Mammary epithelial cell (primary cell): ENCODE measurements at regions of chr6 and their contacts with region 1.

Region 1: DNA sequence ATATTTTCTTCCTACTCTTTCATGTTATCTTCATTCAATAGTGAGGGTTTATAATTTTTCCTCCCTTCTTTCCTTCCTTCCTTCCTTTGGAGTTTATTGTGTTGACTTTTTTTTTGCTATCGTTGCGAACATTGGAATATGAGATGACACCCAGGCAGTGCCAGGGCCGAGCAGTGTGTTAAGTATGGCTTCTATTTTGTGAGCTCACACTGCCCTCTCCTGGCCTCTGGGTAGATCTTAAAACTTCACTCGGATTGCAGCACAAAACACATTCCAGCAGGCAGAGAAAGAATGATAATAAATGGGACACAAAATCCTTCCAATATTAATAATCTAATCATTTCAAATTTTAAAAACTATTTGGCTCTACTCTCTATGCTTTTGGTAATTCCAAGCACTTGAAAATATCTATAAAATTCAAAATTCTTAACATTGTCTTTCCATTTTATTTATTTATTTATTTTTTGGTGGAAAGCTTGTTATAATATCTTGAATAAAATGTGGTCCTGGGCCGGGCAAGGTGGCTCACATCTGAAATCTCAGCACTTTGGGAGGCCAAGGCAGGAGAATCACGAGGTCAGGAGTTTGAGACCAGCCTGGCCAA is 147.4 kb upstream of the OLIG3 start:
- DNase-seq: peak; percentile 57
- H3K4me3 ChIP-seq: no peak overlapping the region
- H3K27ac ChIP-seq: no peak overlapping the region
- H3K4me1 ChIP-seq: peaks cover 10% of the 10 kb centered on the region
- H3K27me3 ChIP-seq: no peaks in the 10 kb centered on the region
- CTCF ChIP-seq: peak; percentile 68 to 69

Region 2: GRCh38 chr6:136967876-136968752 is 673.5 kb before region 1 on chr6:
- CTCF ChIA-PET with region 1: no interaction called
- dilution Hi-C with region 1: no loop called
- in situ Hi-C with region 1: no loop called
- intact Hi-C with region 1: loop called (anchors 5 kb)
- DNase-seq: peak; percentile 64
- H3K4me3 ChIP-seq: no peak overlapping the region
- H3K27ac ChIP-seq: no peak overlapping the region
- H3K4me1 ChIP-seq: no peaks in the 10 kb centered on the region
- H3K27me3 ChIP-seq: no peaks in the 10 kb centered on the region
- CTCF ChIP-seq: peak; percentile 54 to 76

Region 3: DNA sequence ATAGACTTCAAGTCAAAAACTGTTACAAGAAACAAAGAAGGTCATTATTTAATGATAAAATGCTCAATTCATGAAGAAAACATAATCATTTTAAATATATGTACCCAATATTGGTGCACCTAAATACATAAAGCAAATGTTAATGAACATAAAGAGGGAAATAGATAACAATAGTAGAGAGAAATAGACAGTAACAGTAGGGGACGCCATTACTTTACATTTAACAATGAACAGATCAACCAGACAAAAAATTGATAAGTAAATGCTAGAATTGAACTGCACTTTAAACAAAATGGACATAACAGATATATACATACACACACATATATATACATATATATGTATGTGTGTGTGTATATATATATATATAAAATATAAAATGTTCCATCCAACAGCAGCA is 505.5 kb before region 1 on chr6:
- CTCF ChIA-PET with region 1: no interaction called
- dilution Hi-C with region 1: no loop called
- in situ Hi-C with region 1: loop called in 1 of 2 experiments (anchors 25 kb)
- intact Hi-C with region 1: loop called (anchors 1 kb)
- DNase-seq: no peak
- H3K4me3 ChIP-seq: no peak overlapping the region
- H3K27ac ChIP-seq: no peak overlapping the region
- H3K4me1 ChIP-seq: no peaks in the 10 kb centered on the region
- H3K27me3 ChIP-seq: peaks cover 2% of the 10 kb centered on the region
- CTCF ChIP-seq: peak; percentile 63 to 71

Region 4: DNA sequence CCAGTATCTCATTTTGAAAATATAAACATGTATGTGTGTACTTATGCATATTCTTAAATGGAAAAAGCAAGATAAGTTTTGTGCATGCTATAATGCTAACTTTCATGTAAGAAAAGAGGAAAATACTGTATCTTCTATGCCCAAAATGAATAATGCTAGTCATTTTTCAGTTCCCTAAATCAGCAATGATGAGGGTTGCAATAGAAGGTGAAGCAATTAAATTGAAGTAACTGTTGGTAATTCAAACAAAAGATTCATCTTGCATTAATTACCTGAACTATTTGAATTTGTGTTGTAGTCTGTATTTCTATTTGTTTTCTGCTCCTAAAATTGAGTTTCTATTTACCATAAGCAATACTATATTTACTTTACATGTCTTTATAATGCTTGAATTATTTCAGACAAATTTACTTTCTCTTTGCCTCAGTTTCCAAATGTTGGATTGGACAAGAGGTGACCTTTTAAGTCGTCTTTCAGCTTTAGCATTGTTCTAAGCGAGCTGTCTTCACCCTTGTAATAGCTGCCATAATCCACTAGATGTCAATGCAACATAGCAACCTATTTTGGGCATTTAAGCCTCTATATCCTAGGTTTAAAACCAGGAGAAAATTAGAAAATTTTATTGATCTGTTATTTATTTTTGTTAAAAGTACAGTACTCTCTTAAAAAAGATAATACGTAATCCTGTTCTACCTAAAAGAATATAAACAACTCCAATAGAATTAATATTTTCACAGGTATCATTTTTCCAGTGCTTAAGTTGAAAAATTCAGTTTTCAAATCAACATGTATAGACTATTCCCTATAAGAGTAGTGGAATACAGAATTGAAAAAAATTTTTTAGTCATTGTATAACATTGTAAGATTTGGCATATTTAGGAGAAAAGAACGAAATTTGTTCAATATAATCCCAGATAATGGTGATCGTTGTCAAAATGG is 370.1 kb before region 1 on chr6:
- CTCF ChIA-PET with region 1: no interaction called
- dilution Hi-C with region 1: no loop called
- in situ Hi-C with region 1: loop called (anchors 5 to 25 kb)
- intact Hi-C with region 1: loop called (anchors 1 kb)
- DNase-seq: peak; percentile 41
- H3K4me3 ChIP-seq: no peak overlapping the region
- H3K27ac ChIP-seq: no peak overlapping the region
- H3K4me1 ChIP-seq: no peaks in the 10 kb centered on the region
- H3K27me3 ChIP-seq: no peaks in the 10 kb centered on the region
- CTCF ChIP-seq: peak; percentile 92 to 98

Region 5: GRCh38 chr6:137341681-137342195 is 299.8 kb before region 1 on chr6:
- CTCF ChIA-PET with region 1: no interaction called
- dilution Hi-C with region 1: no loop called
- in situ Hi-C with region 1: no loop called
- intact Hi-C with region 1: loop called (anchors 1 kb)
- DNase-seq: no peak
- H3K4me3 ChIP-seq: no peak overlapping the region
- H3K27ac ChIP-seq: no peak overlapping the region
- H3K4me1 ChIP-seq: peaks cover 10% of the 10 kb centered on the region
- H3K27me3 ChIP-seq: peaks cover 7% of the 10 kb centered on the region
- CTCF ChIP-seq: peak in 1 of 2 donors; percentile 13

Region 6: DNA sequence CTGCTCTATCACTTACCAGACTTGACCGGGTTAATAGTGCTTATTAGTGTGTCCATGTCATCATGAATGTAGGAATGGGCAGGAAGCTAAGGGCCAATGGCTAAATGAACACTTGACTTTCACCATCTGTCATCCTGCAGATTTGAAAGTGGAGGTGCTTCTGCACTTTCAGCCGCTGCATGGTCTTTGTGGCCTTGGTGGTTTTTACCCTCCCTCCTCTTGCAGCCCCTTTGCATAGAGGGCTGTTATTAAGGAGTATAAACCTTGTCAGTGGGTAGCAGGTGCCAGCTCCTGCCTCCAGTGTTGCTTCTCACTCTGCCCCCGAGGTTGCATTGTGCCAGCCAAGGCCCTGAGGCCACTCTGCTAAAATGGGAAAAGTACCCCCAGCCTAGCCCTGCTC is 103.3 kb after region 1 on chr6:
- CTCF ChIA-PET with region 1: no interaction called
- dilution Hi-C with region 1: no loop called
- in situ Hi-C with region 1: no loop called
- intact Hi-C with region 1: no loop called
- DNase-seq: no peak
- H3K4me3 ChIP-seq: no peak overlapping the region
- H3K27ac ChIP-seq: no peak overlapping the region
- H3K4me1 ChIP-seq: peaks cover 10% of the 10 kb centered on the region
- H3K27me3 ChIP-seq: no peaks in the 10 kb centered on the region
- CTCF ChIP-seq: no peak